GM18951 (cell line): ENCODE measurements at regions of chr12 and their contacts with region 1.

Region 1: GRCh38 chr12:63056649-63057048 is 94.4 kb downstream of the AVPR1A start:
- POLR2A ChIP-seq: no peak

Region 2: GRCh38 chr12:62426089-62426488 is 630.6 kb before region 1 on chr12:
- in situ Hi-C with region 1: loop called (anchors 10 kb)
- POLR2A ChIP-seq: no peak

Region 3: DNA sequence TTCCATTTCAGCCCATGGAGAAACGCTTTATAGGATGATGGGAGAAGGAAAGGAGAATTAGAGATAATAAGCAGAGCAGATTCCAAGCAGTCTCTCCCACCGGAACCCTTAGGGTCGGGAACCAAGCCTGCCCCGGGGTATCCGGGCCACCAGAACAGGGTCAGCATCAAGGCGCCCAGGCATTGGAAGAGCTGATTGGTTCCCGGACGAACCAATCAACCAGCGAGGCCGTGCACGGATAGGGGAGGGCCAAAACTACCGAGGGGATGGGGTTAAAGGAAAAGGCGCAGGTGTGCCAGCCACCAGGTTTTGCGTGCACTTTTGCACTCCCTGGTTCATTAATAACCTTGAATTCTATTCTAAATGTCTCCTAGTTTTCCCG is 123.4 kb before region 1 on chr12:
- in situ Hi-C with region 1: no loop called
- POLR2A ChIP-seq: no peak